ENCODE measurements at regions of chr18 and their contacts with region 1.

Region 1: GRCh38 chr18:64330161-64330560 is 181.3 kb upstream of the LINC00305 start:
- DNase-seq: no peak
- ATAC-seq: no peak
- H3K4me3 Mint-ChIP-seq: no peak overlapping the region
- H3K27ac Mint-ChIP-seq: no peak overlapping the region
- H3K4me1 Mint-ChIP-seq: no peaks in the 10 kb centered on the region
- H3K27me3 Mint-ChIP-seq: no peaks in the 10 kb centered on the region

Region 2: GRCh38 chr18:64219517-64219916 is 110.6 kb before region 1 on chr18:
- CTCF ChIA-PET with region 1: no interaction called
- POLR2A ChIA-PET with region 1: no interaction called
- intact Hi-C with region 1: no loop called
- DNase-seq: no peak
- ATAC-seq: no peak
- H3K4me3 Mint-ChIP-seq: no peak overlapping the region
- H3K27ac Mint-ChIP-seq: no peak overlapping the region
- H3K4me1 Mint-ChIP-seq: no peaks in the 10 kb centered on the region
- H3K27me3 Mint-ChIP-seq: no peaks in the 10 kb centered on the region

Region 3: DNA sequence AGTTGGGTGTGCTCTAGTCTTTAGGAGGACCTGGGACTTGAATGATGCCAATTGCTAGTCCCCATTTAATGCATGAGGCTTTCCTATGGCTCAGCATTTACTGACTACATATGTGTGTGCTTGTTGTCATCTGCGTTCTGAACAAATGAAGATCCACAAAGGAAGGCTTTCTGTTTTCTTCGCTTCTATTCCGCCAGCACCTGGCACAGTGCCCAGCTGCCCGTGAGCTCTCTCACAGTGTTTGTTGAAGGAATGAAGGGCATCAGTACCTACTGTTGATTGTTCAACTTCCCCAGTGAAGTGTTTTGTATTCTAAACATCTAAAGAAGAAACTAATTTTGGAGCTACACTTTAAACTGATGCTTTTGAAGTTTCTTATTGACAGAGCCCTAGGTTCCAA is 58.9 kb before region 1 on chr18:
- CTCF ChIA-PET with region 1: no interaction called
- POLR2A ChIA-PET with region 1: no interaction called
- intact Hi-C with region 1: loop called in 1 of 2 experiments (anchors 10 kb)
- DNase-seq: no peak
- ATAC-seq: no peak
- H3K4me3 Mint-ChIP-seq: no peak overlapping the region
- H3K27ac Mint-ChIP-seq: no peak overlapping the region
- H3K4me1 Mint-ChIP-seq: no peaks in the 10 kb centered on the region
- H3K27me3 Mint-ChIP-seq: no peaks in the 10 kb centered on the region